CD8-positive, alpha-beta memory T cell (primary cell): ENCODE measurements at regions of chr22 and their contacts with region 1.

Region 1: DNA sequence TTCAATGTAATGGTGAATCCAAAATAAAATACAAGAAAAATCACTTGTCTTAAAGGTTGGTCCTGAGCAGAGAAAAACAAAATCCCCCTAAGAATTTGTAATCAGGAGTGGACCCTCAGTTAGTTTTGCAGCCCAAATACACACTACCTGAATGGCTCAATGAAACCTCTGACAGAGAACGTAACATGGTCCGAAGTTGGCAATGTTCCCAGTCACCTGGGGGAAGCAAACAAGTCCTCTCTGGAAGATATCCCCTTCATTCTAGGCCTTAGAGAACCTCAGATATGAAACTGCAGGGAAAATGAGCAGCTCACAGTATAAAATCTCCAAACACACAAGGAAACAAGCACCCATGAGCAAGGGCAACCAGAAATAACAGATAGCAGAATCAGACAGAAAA is 58.2 kb downstream of the MORC2 start:
- DNase-seq: no peak
- H3K4me3 ChIP-seq: no peak overlapping the region
- H3K4me3 Mint-ChIP-seq: no peak overlapping the region
- H3K27ac ChIP-seq: no peak overlapping the region
- H3K27ac Mint-ChIP-seq: peak overlapping the region in 1 of 8 donors; percentile 32
- H3K4me1 ChIP-seq: no peaks in the 10 kb centered on the region
- H3K4me1 Mint-ChIP-seq: peaks cover 0 to 2% (median 0%) of the 10 kb centered on the region in 3 donors
- H3K27me3 ChIP-seq: no peaks in the 10 kb centered on the region
- H3K27me3 Mint-ChIP-seq: no peaks in the 10 kb centered on the region

Region 2: DNA sequence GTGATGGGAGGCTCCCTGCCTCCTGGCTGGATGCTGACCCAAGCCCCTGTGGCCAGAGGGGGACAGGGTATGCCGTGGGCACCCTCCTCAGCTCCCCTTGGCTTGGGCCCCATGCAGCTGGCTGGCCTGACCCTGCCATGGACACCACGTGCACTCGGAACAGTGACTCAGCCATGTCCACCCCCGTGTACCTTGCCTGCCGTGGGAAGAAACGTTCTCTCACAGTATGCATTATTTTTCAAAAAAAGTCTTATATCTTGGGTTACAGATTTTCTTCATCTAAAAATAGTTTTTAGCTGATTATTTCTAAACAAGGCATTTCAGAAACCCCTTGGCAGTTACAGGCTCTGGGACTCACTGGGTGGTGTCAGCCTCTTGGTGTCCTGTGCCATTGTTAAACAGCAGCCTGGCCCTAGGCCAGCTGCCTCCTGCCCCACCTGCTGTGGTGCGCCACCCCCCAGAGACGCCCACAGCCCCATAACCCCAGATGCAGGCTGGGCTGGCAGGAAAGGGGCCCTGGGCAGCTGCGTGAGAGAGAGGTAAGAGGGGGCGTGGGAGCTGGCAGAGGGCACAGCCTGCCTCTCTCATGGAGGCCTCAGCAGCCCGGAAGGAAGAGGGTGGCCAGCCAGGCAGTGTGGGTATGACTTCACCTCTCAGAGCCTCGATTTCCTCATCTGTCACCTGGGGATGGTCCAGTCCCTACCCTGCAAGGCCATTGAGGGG is 41.5 kb before region 1 on chr22:
- CTCF ChIA-PET with region 1: no interaction called
- POLR2A ChIA-PET with region 1: no interaction called
- DNase-seq: no peak
- H3K4me3 ChIP-seq: no peak overlapping the region
- H3K4me3 Mint-ChIP-seq: no peak overlapping the region
- H3K27ac ChIP-seq: no peak overlapping the region
- H3K27ac Mint-ChIP-seq: no peak overlapping the region
- H3K4me1 ChIP-seq: no peaks in the 10 kb centered on the region
- H3K4me1 Mint-ChIP-seq: no peaks in the 10 kb centered on the region
- H3K27me3 ChIP-seq: no peaks in the 10 kb centered on the region
- H3K27me3 Mint-ChIP-seq: no peaks in the 10 kb centered on the region

Region 3: GRCh38 chr22:30920407-30920806 is 10.0 kb after region 1 on chr22:
- CTCF ChIA-PET with region 1: interaction called, 10 read pairs
- POLR2A ChIA-PET with region 1: no interaction called
- DNase-seq: peak; percentile 66 to 87 (median 74)
- H3K4me3 ChIP-seq: peak overlapping the region; percentile 44
- H3K4me3 Mint-ChIP-seq: peak overlapping the region; percentile 12 to 76 (median 64)
- H3K27ac ChIP-seq: no peak overlapping the region
- H3K27ac Mint-ChIP-seq: peak overlapping the region in 7 of 8 donors; percentile 0 to 52 (median 10)
- H3K4me1 ChIP-seq: peaks cover 22% of the 10 kb centered on the region
- H3K4me1 Mint-ChIP-seq: peaks cover 12 to 31% (median 14%) of the 10 kb centered on the region in 3 donors
- H3K27me3 ChIP-seq: no peaks in the 10 kb centered on the region
- H3K27me3 Mint-ChIP-seq: no peaks in the 10 kb centered on the region